AG04449 (cell line): ENCODE measurements at regions of chr11 and their contacts with region 1.

Region 1: GRCh38 chr11:86632499-86633269 is 39.7 kb downstream of the ME3 start:
- DNase-seq: peak; percentile 85
- H3K4me3 ChIP-seq: no peak overlapping the region
- CTCF ChIP-seq: peak; percentile 52

Region 2: DNA sequence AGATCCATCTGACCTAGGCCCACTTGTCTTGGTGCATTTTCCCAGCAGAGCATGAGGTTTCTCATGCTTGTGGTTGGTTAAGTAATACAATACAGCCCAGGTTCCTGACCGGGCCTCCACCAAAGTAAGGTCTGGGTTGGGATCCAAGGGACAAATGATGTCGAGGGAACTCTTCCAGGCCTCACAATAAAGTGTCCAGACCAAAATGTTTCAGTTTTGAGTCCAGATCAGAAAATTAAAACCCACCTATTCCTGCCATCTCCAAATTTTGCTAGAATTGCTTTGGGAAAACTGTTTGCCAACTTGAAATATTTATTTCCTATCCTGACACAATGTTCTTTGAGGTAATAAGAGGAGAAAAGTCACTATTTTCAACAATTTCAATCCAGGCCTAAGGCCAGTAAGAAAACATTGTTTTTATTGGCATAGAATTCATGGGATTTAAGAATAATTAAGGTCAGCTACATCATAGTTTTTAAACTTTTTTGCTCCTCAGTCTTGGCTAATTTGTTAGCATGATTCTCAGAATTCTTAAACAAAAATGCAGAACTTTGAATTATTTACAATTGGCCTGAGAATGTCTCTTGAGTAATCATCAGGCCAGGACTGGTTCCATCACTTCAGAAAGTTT is 11.7 kb before region 1 on chr11:
- CTCF ChIA-PET with region 1: interaction called, 11 read pairs
- POLR2A ChIA-PET with region 1: no interaction called
- DNase-seq: no peak
- H3K4me3 ChIP-seq: no peak overlapping the region
- CTCF ChIP-seq: no peak

Region 3: GRCh38 chr11:86644291-86644690 is 11.6 kb after region 1 on chr11:
- CTCF ChIA-PET with region 1: interaction called, 11 read pairs
- POLR2A ChIA-PET with region 1: no interaction called
- DNase-seq: no peak
- H3K4me3 ChIP-seq: no peak overlapping the region
- CTCF ChIP-seq: no peak